Heart right ventricle (tissue), 16 donors: ENCODE measurements at regions of chr11 and their contacts with region 1.

Region 1: DNA sequence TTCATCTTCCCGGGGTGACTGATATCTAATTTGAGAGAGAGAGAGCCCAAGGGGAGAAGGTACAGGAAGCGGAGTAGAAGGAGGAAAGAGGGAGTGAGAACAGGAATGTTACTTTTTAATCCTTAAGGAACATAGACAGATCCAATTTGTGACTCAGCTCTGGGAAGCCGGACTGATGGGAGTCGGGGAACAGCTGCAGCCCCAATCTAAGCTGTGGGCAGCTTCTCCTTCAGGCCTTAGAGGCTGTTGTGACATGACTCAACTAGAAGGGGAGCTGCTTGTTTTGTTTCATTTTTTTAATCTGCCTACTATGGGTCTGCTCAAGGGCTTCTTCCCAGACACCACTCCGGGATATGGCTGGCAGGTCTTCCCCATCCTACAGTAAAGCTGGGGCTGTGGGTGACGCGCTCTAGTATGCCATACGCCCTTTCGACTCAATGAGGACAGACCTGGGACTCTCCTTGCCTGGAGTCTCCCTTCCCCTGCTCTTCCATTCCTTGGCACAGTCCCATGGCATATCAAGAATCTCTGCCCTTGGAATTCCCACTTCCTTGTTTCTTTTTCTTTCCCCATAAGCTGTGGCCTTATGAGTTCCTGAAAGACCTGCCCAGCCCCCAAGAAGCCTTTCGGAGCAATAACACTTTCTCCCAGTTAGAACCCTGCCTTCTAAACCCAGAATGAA is 103.3 kb upstream of the AKIP1 start:
- DNase-seq: peak in 1 of 2 donors; percentile 46
- ATAC-seq: peak in 7 of 8 donors; percentile 24 to 66 (median 44)
- H3K4me3 ChIP-seq: peak overlapping the region in 9 of 10 donors; percentile 0 to 72 (median 65)
- H3K27ac ChIP-seq: peak overlapping the region; percentile 20 to 96 (median 90)
- H3K4me1 ChIP-seq: peaks cover 19 to 90% (median 68%) of the 10 kb centered on the region in 9 donors
- H3K27me3 ChIP-seq: no peaks in the 10 kb centered on the region
- CTCF ChIP-seq: no peak

Region 2: DNA sequence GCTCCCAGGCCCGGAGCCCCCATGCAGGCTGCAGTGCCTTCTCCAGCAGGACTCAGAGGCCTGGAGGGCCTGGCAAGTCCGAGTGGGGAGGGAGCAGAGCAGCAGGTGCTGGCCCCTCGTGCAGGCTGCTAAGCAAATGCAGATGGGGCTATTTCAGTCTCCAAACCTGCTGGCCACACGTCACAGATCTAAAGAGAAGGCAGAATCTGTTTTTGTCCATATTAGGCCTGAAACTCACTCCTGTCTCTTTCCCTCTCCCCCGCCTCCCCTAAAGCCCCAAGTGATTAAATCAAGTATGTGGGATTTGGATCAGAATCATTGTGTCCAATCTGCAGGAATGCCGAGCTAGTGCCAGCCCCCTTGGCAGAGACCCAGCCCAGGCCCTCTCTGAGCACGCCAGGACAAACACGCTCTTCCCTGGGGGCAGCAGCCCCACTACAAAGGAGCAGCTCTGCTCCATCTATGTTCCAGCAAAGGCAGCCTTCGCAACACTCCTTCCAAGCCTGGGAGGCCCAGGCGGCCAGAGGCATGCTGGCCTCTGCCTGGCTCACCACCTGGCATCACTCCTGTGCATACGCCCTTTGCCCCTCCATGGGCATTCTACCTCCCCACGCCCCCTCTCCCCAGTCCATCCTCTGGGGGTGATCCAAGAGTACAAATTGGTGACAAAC is 98.5 kb before region 1 on chr11:
- intact Hi-C with region 1: loop called in 2 of 10 experiments (anchors 5 kb)
- DNase-seq: peak; percentile 80 to 91
- ATAC-seq: peak; percentile 57 to 77 (median 74)
- H3K4me3 ChIP-seq: no peak overlapping the region
- H3K27ac ChIP-seq: peak overlapping the region; percentile 27 to 89 (median 84)
- H3K4me1 ChIP-seq: peaks cover 26 to 50% (median 45%) of the 10 kb centered on the region in 9 donors
- H3K27me3 ChIP-seq: no peaks in the 10 kb centered on the region
- CTCF ChIP-seq: no peak

Region 3: DNA sequence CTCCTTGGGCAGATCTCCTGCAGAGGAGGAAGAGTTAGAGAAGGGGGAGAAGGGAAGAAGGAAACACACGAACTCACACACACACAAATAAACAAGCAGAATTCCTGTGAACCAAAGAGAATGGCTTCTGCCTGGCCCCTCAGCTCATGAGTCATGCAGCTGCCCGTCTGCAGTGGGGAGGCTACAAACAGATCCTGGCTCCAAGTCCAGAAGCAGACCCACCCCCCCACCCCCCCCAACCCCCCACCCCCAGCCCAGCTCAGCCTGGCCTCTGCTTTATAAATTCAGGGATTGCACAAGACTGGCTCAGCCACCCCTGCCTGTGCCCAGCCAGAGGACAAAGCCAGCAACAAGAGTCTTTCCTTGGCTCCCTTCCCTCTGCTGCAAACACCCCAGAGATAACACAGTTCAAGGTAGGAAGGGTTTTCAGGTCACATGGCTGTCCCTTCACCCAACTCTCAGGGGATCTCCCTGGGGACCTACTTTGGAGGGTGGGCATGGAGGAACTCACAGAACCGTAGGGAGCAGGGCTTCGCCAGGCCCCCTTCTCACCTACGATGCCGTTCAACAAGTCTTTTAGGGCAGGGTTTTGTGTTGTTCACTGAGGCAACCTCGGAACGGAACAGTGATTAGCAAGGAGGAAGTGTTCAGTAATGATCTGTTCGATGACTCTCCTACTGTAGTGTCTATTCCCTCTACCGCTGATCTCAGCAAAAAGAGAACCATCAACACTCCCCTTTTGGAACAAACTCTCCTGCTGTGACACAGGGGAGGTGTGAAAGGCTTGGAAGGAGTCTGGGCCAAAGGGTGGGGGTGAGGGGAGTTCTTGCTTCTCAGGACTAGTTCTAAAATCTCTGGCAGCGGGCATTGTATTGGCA is 89.6 kb before region 1 on chr11:
- intact Hi-C with region 1: loop called in 4 of 10 experiments (anchors 5 kb)
- DNase-seq: peak; percentile 39 to 57
- ATAC-seq: peak; percentile 35 to 85 (median 70)
- H3K4me3 ChIP-seq: no peak overlapping the region
- H3K27ac ChIP-seq: peak overlapping the region; percentile 44 to 90 (median 82)
- H3K4me1 ChIP-seq: peaks cover 42 to 99% (median 94%) of the 10 kb centered on the region in 9 donors
- H3K27me3 ChIP-seq: no peaks in the 10 kb centered on the region
- CTCF ChIP-seq: no peak

Region 4: DNA sequence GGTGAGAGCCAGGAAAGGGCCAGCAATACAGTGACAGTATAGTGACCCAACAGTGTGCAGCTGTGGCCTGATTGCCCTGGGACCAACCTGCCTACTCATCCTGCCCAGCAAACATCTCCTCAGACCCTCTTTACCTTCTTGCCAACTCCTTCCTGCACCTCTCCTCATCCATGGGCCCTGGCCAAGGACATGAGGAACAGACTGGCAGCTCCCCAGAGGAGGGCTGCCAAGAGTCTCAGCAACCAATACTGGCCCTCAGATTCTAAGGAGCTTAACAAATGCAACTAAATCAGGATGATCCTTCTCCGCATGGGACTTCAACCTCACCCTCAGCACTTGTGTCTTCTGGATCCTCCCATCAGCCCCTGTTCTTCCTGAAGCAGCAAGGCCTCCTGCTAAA is 48.1 kb before region 1 on chr11:
- intact Hi-C with region 1: loop called in 1 of 10 experiments (anchors 5 kb)
- DNase-seq: peak in 1 of 2 donors; percentile 27
- ATAC-seq: peak; percentile 10 to 59 (median 38)
- H3K4me3 ChIP-seq: no peak overlapping the region
- H3K27ac ChIP-seq: peak overlapping the region in 8 of 10 donors; percentile 33 to 77 (median 46)
- H3K4me1 ChIP-seq: peaks cover 22 to 96% (median 73%) of the 10 kb centered on the region in 9 donors
- H3K27me3 ChIP-seq: no peaks in the 10 kb centered on the region
- CTCF ChIP-seq: no peak

Region 5: GRCh38 chr11:8773916-8774539 is 33.7 kb before region 1 on chr11:
- intact Hi-C with region 1: loop called in 3 of 10 experiments (anchors 5 kb)
- DNase-seq: no peak
- ATAC-seq: no peak
- H3K4me3 ChIP-seq: no peak overlapping the region
- H3K27ac ChIP-seq: peak overlapping the region in 8 of 10 donors; percentile 6 to 78 (median 60)
- H3K4me1 ChIP-seq: peaks cover 25 to 94% (median 72%) of the 10 kb centered on the region in 9 donors
- H3K27me3 ChIP-seq: no peaks in the 10 kb centered on the region
- CTCF ChIP-seq: no peak

Region 6: DNA sequence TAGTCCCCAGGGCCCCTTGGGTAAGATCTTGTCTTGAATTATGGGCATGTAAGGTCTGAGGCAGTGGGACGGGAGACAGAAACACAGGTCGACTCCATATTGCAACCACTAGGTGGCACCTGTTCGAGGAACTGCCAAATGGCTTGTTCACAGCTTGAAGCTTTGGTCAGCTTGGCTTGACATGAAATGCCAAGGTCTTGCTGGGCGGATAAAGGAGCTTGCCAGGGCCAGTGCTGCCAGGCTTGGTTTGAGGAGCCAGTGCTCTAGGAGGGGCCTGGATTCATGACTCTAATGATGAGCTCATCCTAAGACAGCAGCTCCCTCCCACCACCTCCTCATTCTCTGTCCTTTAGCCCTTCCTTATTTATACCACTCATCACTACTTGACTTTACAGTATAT is 208.0 kb after region 1 on chr11:
- intact Hi-C with region 1: no loop called
- DNase-seq: peak in 1 of 2 donors; percentile 66
- ATAC-seq: peak; percentile 64 to 84 (median 75)
- H3K4me3 ChIP-seq: no peak overlapping the region
- H3K27ac ChIP-seq: no peak overlapping the region
- H3K4me1 ChIP-seq: peaks cover 0 to 32% (median 21%) of the 10 kb centered on the region in 9 donors
- H3K27me3 ChIP-seq: no peaks in the 10 kb centered on the region
- CTCF ChIP-seq: peak; percentile 45 to 83 (median 79)